Heart left ventricle (tissue), 16 donors: ENCODE measurements at regions of chr21 and their contacts with region 1.

Region 1: DNA sequence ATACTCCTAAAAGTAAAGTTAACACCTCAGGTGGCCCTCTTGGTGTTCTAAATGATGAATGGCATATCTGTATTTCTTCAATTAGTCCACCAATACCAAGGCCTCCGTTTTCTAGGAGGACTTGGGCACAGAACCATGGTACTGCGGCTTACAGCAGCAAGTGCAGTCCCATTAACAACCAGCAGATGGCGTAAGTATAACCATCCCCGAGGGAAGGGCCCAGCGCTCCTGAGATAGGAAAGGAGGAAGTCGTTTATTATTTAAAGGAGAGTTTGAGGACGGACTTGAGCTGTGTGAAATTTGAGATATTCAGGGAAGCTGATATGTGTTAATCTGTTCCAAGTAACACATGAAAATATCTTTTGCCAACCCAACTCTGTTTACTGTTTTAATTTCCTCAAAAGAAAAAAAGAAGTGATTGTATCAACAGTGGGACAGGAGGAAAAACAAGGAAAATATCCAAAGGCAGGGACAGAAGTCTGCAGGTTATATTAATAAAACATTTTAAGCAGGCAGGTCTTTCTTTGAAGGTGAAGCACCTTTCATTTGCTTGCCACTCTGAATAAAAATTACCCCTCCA is 37.7 kb upstream of the KCNJ15 start:
- DNase-seq: peak; percentile 62 to 71 (median 68)
- ATAC-seq: peak in 3 of 4 donors; percentile 72 to 85 (median 85)
- H3K4me3 ChIP-seq: no peak overlapping the region
- H3K27ac ChIP-seq: peak overlapping the region in 1 of 12 donors; percentile 22
- H3K4me1 ChIP-seq: peaks cover 0 to 6% (median 0%) of the 10 kb centered on the region in 12 donors
- H3K27me3 ChIP-seq: peaks cover 0 to 1% (median 0%) of the 10 kb centered on the region in 9 donors
- CTCF ChIP-seq: peak; percentile 92 to 98 (median 96)
- POLR2A ChIP-seq: no peak

Region 2: DNA sequence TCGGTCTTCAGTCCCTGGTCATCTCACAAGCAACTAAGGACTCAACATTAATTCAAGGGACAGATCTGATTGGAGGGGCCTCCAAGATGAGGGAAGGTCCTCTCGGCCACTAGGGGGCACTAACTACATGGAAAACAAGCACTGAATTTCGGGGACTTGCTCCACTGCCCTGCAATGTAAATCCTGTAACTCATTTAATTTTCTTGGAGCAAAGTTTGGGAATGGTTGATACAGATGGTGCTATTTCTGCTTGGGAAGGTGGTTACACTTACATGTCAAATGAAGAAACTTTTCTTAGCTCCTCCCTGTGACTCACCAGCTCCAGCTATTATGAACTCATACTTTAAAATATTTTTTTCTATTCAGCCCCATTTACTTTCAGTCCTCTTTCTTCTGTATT is 59.8 kb before region 1 on chr21:
- intact Hi-C with region 1: loop called in 3 of 10 experiments (anchors 5 kb)
- DNase-seq: peak in 4 of 5 donors; percentile 45 to 70 (median 50)
- ATAC-seq: peak in 3 of 4 donors; percentile 55 to 66 (median 65)
- H3K4me3 ChIP-seq: no peak overlapping the region
- H3K27ac ChIP-seq: no peak overlapping the region
- H3K4me1 ChIP-seq: peaks cover 0 to 7% (median 0%) of the 10 kb centered on the region in 12 donors
- H3K27me3 ChIP-seq: peaks cover 0 to 18% (median 5%) of the 10 kb centered on the region in 9 donors
- CTCF ChIP-seq: peak; percentile 66 to 88 (median 80)
- POLR2A ChIP-seq: no peak

Region 3: GRCh38 chr21:38170280-38170679 is 48.9 kb before region 1 on chr21:
- intact Hi-C with region 1: loop called in 4 of 10 experiments (anchors 5 kb)
- DNase-seq: peak in 1 of 5 donors; percentile 33
- ATAC-seq: peak in 2 of 4 donors; percentile 23 to 57
- H3K4me3 ChIP-seq: no peak overlapping the region
- H3K27ac ChIP-seq: no peak overlapping the region
- H3K4me1 ChIP-seq: peaks cover 0 to 30% (median 16%) of the 10 kb centered on the region in 12 donors
- H3K27me3 ChIP-seq: no peaks in the 10 kb centered on the region
- CTCF ChIP-seq: peak in 11 of 12 donors; percentile 12 to 47 (median 40)
- POLR2A ChIP-seq: no peak

Region 4: DNA sequence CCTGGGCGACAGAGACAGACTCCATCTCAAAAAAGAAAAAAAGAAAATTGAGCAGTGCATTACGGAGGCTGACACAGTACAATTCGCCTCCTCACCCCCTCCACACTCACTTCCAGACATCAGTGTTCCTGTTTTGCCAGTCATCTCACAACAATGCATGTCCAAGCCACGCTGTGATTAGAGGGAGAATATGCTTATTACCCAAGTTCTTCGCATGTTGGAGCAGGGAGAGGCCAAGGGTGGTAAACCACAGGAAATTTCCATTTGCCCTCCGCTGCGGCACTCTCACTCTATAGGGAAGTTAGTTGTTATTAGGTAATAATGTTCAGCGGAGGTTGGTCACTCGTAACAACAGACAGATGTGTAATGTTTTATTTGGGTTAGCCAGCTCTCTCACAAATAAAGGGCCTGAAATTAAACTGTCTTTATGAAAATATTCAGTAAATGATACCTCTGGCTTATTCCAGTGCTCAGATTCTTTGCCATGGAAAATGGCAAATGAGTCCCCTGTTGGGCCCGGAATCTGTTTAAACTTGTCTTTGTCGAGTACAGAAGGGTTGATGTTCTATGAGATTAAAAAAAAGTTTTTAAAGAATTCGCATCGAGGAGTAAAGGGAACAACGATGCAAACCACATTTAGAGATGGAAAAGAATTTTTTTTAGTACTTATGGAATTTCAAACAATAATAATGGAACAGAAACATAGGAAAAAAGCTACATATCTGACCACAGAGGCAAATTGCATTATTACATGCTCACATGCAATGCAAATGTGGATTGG is 70.8 kb after region 1 on chr21:
- intact Hi-C with region 1: loop called in 1 of 10 experiments (anchors 10 kb)
- DNase-seq: peak in 3 of 5 donors; percentile 33 to 37 (median 34)
- ATAC-seq: peak in 3 of 4 donors; percentile 65 to 91 (median 71)
- H3K4me3 ChIP-seq: no peak overlapping the region
- H3K27ac ChIP-seq: peak overlapping the region in 1 of 12 donors; percentile 80
- H3K4me1 ChIP-seq: peaks cover 0 to 23% (median 0%) of the 10 kb centered on the region in 12 donors
- H3K27me3 ChIP-seq: no peaks in the 10 kb centered on the region
- CTCF ChIP-seq: no peak
- POLR2A ChIP-seq: no peak

Region 5: DNA sequence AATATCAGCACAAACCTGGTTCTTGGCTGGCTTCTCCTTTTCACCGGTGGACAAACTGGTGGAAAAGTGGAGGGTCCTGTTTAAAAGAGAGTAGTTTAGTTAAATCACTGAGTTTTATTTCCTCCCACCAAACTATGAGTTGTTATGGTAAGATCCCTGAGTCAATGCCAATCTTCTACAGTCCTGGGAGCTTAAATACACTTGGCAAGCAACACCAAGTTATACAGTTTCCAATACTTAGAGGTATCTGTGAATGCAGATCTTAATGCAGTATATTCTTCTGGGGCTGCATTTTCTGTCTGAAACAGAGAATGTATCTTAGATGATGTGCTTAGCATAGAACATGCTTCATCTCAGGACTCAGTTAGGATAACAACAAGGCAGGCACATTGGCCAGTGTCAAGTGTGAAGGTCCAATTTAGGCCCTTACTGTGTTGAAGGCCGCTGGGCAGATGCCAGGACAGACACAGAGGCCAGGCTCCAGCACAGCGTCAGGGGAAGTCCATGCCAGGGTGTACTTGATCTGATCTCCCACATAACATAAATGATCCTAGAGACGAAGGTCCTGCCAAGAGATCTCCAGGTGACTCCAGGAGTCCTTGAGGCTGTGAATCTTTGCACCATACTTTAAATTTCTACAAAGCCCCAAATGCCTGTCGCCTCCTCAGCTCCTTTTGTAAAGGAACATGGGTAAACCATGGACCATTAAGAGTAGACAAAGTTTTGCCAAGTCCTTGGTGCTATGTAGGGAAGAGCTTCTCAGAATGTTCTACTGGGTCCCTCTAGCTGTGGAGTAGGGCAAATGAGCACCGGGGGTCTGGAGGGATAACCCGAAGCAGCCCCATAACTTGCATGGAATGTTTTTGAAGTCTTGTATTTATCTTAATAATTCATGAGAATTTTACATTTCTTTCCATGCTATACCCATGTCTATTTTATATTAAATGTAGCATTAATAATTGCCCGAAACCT is 114.4 kb after region 1 on chr21:
- intact Hi-C with region 1: no loop called
- DNase-seq: peak in 1 of 5 donors; percentile 54
- ATAC-seq: peak in 3 of 4 donors; percentile 41 to 65 (median 62)
- H3K4me3 ChIP-seq: no peak overlapping the region
- H3K27ac ChIP-seq: no peak overlapping the region
- H3K4me1 ChIP-seq: no peaks in the 10 kb centered on the region
- H3K27me3 ChIP-seq: no peaks in the 10 kb centered on the region
- CTCF ChIP-seq: peak in 4 of 12 donors; percentile 31 to 39 (median 36)
- POLR2A ChIP-seq: no peak